Esophagus muscularis mucosa (tissue), 4 donors: ENCODE measurements at regions of chr3 and their contacts with region 1.

Region 1: DNA sequence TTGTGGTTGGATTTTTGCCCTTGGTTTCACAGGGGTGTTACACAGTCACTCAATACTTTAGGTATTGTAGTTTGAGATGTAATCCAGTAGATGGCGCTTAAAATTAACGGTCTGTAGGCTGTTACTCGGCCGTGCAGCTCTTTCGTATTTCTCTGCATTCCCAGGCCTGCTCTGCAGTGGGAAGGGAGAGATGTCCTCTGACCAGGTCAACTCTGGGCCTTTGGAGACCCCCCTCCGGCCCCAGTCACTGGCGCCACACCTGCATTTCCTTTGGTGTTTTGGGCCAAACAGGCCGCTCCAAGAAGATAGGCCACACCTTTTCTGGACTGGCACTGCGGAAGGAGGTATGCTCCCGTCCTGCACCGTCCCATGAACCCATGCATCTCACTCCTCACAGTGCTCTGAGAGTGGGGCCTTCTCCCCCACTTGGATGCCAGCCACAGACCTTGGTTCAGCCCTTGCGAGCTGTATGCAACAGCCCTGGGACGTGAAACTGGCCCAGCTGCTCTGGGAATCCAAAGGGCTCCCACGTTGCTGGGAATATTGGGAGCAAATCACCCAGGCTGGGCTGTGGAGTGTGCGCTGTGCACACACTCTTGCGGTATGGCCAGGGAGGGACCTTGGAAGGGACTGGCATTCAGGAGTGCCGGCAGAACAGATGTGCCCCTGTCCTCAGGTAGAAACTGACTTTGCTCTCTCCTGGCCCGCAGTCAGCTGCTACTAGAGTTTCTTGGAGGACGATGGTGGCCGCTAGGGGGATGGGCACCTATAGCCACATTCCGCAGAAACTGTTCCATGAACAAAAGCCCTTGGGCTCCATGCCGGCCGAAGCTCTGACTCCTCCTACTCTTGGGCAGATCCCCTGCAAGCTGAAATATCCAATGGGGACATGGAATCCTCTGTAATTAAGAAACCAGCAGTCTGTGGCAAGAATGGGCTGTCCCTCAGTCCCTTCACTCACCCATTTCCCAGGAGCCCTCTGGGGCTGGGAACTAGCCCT is 410.5 kb upstream of the CADM2 start:
- DNase-seq: no peak
- H3K4me3 ChIP-seq: peak overlapping the region in 2 of 4 donors; percentile 29 to 33
- H3K27ac ChIP-seq: no peak overlapping the region
- H3K4me1 ChIP-seq: peaks cover 0 to 5% (median 0%) of the 10 kb centered on the region in 4 donors
- H3K27me3 ChIP-seq: no peaks in the 10 kb centered on the region
- CTCF ChIP-seq: peak; percentile 31 to 59 (median 36)
- EP300 ChIP-seq: no peak
- POLR2A ChIP-seq: no peak

Region 2: DNA sequence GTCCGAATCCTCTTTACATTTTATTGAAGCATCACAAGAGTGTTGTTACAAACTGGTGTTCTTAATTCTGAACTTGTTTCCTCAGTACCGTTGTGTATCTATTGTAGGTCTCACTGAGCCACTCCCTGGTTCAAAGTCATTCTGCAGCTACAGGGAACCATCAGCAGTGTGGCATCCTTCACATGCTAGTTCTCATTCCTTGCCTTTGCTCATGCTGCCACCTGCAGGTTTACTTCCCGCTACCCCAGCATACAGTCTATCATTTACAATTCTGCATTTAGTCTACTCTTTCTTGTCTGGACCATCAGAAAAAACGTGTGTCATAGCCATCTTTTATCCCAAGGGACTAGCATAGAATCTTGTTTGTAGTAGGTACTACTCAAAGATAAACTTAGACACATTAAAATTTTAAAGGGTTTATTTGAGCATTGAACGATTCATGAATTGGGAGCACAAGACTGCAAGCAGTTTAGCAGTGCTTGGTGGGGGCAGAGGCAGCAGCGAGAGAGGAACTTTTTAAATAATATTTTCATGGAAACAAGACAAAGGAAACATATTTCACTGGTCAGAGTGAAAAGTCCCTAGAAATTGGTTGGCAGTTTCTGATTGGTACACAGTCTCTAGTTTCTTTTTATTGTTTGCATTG is 812.6 kb after region 1 on chr3:
- intact Hi-C with region 1: loop called (anchors 5 kb)
- DNase-seq: no peak
- H3K4me3 ChIP-seq: no peak overlapping the region
- H3K27ac ChIP-seq: no peak overlapping the region
- H3K4me1 ChIP-seq: no peaks in the 10 kb centered on the region
- H3K27me3 ChIP-seq: no peaks in the 10 kb centered on the region
- CTCF ChIP-seq: peak; percentile 28 to 50 (median 29)
- EP300 ChIP-seq: no peak
- POLR2A ChIP-seq: no peak

Region 3: DNA sequence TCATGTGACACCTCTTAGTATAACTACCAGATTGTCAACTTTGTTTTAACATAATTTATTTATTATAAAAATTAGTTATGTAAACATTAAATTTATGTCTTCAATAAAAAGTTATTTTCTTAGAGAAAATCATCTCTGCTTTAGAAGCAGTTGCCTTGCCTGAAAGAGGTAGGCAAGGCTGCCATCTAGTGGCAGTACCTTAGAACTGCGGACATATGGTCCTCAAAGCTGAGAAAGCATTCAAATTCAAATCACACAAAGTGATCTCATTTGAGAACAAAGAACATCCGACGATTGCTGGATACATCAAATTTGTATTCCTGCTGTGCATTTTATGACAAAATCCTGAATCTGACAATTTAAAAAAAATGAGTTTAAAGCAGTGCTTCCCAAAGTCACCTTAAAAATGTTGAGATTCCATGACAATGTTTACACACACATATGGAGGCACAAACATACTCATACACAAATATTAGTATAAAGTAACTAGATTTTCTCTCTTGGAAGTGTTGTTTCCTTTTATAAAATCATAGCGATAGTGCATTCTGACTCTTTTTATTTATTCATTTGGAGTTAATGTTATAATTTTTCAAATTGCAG is 1027.9 kb after region 1 on chr3:
- intact Hi-C with region 1: loop called (anchors 5 kb)
- DNase-seq: no peak
- H3K4me3 ChIP-seq: no peak overlapping the region
- H3K27ac ChIP-seq: no peak overlapping the region
- H3K4me1 ChIP-seq: no peaks in the 10 kb centered on the region
- H3K27me3 ChIP-seq: no peaks in the 10 kb centered on the region
- CTCF ChIP-seq: peak; percentile 63 to 83 (median 81)
- EP300 ChIP-seq: no peak
- POLR2A ChIP-seq: no peak